CD4-positive, alpha-beta T cell (primary cell): ENCODE measurements at regions of chr9 and their contacts with region 1.

Region 1: DNA sequence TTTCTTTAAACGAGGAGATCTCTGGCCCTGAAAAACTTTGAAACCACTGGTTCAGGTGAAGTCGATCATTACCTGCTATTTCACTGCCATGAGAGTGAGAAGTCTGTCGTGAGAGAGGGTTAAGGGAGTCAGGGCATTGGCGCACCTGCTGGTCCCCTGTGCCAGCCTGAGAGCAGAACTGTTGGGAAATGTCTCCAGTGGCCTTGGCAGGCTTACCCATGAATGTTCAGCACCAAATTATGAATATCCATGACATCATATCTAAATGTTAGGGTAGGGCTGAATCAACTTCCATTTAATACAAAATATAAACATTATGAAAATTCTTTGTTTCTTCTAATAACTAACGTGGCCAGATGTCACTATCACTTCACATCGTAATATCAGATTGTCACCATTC is 379.3 kb downstream of the KDM4C start:
- DNase-seq: no peak
- ATAC-seq: no peak
- H3K4me3 ChIP-seq: no peak overlapping the region
- H3K4me3 Mint-ChIP-seq: no peak overlapping the region
- H3K27ac ChIP-seq: no peak overlapping the region
- H3K27ac Mint-ChIP-seq: no peak overlapping the region
- H3K4me1 ChIP-seq: no peaks in the 10 kb centered on the region
- H3K4me1 Mint-ChIP-seq: peaks cover 5% of the 10 kb centered on the region
- H3K27me3 ChIP-seq: no peaks in the 10 kb centered on the region
- H3K27me3 Mint-ChIP-seq: no peaks in the 10 kb centered on the region
- CTCF ChIP-seq: no peak

Region 2: DNA sequence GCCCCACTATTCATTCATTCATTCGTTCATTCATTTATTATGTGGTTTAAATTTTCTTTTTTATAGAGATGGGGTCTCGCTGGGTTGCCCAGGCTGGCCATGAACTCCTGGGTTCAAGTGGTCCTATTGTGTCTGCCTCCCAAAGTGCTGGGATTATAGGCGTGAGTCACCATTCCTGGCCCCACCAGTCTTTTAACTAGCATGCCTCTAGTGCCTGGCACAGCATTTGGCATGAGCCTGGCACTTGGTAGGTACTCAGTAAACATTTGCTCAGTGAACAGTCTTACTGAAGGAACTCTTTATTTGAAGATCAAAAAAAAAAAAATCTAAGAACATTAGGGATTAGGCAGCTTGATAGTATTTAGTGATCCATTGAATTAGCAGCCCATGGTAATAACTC is 281.2 kb before region 1 on chr9:
- CTCF ChIA-PET with region 1: no interaction called
- POLR2A ChIA-PET with region 1: no interaction called
- intact Hi-C with region 1: no loop called
- DNase-seq: no peak
- ATAC-seq: no peak
- H3K4me3 ChIP-seq: no peak overlapping the region
- H3K4me3 Mint-ChIP-seq: no peak overlapping the region
- H3K27ac ChIP-seq: no peak overlapping the region
- H3K27ac Mint-ChIP-seq: no peak overlapping the region
- H3K4me1 ChIP-seq: no peaks in the 10 kb centered on the region
- H3K4me1 Mint-ChIP-seq: peaks cover 8% of the 10 kb centered on the region
- H3K27me3 ChIP-seq: no peaks in the 10 kb centered on the region
- H3K27me3 Mint-ChIP-seq: no peaks in the 10 kb centered on the region
- CTCF ChIP-seq: no peak

Region 3: GRCh38 chr9:7011395-7012067 is 125.5 kb before region 1 on chr9:
- CTCF ChIA-PET with region 1: no interaction called
- POLR2A ChIA-PET with region 1: no interaction called
- intact Hi-C with region 1: no loop called
- DNase-seq: peak in 3 of 14 experiments; percentile 9 to 23 (median 16)
- ATAC-seq: no peak
- H3K4me3 ChIP-seq: no peak overlapping the region
- H3K4me3 Mint-ChIP-seq: no peak overlapping the region
- H3K27ac ChIP-seq: no peak overlapping the region
- H3K27ac Mint-ChIP-seq: peak overlapping the region; percentile 26
- H3K4me1 ChIP-seq: no peaks in the 10 kb centered on the region
- H3K4me1 Mint-ChIP-seq: peaks cover 5% of the 10 kb centered on the region
- H3K27me3 ChIP-seq: no peaks in the 10 kb centered on the region
- H3K27me3 Mint-ChIP-seq: no peaks in the 10 kb centered on the region
- CTCF ChIP-seq: no peak

Region 4: GRCh38 chr9:7196467-7196866 is 59.4 kb after region 1 on chr9:
- CTCF ChIA-PET with region 1: no interaction called
- POLR2A ChIA-PET with region 1: no interaction called
- intact Hi-C with region 1: loop called in 1 of 2 experiments (anchors 10 kb)
- DNase-seq: no peak
- ATAC-seq: no peak
- H3K4me3 ChIP-seq: no peak overlapping the region
- H3K4me3 Mint-ChIP-seq: no peak overlapping the region
- H3K27ac ChIP-seq: no peak overlapping the region
- H3K27ac Mint-ChIP-seq: no peak overlapping the region
- H3K4me1 ChIP-seq: no peaks in the 10 kb centered on the region
- H3K4me1 Mint-ChIP-seq: no peaks in the 10 kb centered on the region
- H3K27me3 ChIP-seq: no peaks in the 10 kb centered on the region
- H3K27me3 Mint-ChIP-seq: no peaks in the 10 kb centered on the region
- CTCF ChIP-seq: no peak

Region 5: DNA sequence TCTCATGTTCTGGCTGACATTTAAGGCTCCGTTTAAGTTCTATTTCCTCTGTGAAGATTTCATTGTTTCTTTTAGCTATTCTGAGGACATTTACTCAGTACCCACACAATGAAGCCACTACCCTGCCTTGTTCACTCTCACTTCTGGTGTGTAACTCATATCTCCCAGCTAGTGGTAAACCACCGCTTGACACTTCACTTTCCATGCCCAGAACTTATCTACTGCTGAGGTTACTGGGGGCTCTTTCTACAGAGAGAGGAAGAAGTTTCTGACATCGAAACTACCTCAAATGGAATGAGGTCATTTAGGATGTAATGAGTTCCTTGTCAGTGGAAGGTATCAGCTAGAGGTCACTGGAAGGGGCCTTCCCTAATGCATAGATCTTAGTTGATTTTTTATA is 161.1 kb after region 1 on chr9:
- CTCF ChIA-PET with region 1: no interaction called
- POLR2A ChIA-PET with region 1: no interaction called
- intact Hi-C with region 1: no loop called
- DNase-seq: peak in 3 of 14 experiments; percentile 5 to 28 (median 8)
- ATAC-seq: no peak
- H3K4me3 ChIP-seq: no peak overlapping the region
- H3K4me3 Mint-ChIP-seq: no peak overlapping the region
- H3K27ac ChIP-seq: no peak overlapping the region
- H3K27ac Mint-ChIP-seq: no peak overlapping the region
- H3K4me1 ChIP-seq: no peaks in the 10 kb centered on the region
- H3K4me1 Mint-ChIP-seq: no peaks in the 10 kb centered on the region
- H3K27me3 ChIP-seq: peaks cover 0 to 11% of the 10 kb centered on the region in 2 experiments
- H3K27me3 Mint-ChIP-seq: peaks cover 9% of the 10 kb centered on the region
- CTCF ChIP-seq: no peak